ENCODE measurements at regions of chr1 and their contacts with region 1.

Region 1: GRCh38 chr1:109548321-109549267 is at the start of gene GNAI3:
- DNase-seq: peak; percentile 78 to 97 (median 95)
- ATAC-seq: peak; percentile 96
- H3K4me3 ChIP-seq: peak within 1 kb of the TSS; percentile 89
- H3K4me3 Mint-ChIP-seq: peak within 1 kb of the TSS; percentile 90 to 99 (median 97)
- H3K27ac ChIP-seq: peak within 1 kb of the TSS; percentile 93
- H3K27ac Mint-ChIP-seq: peak within 1 kb of the TSS; percentile 89 to 100 (median 99)
- H3K4me1 ChIP-seq: peaks cover 25 to 27% of the 10 kb centered on the region in 2 donors
- H3K4me1 Mint-ChIP-seq: peaks cover 30 to 75% (median 55%) of the 10 kb centered on the region in 7 donors
- H3K27me3 ChIP-seq: no peaks in the 10 kb centered on the region
- H3K27me3 Mint-ChIP-seq: no peaks in the 10 kb centered on the region
- total RNA-seq, gene GNAI3: 4.9 to 9.3 (median 7.0) TPM

Region 2: GRCh38 chr1:109109906-109110305 is 438.7 kb before region 1 on chr1:
- CTCF ChIA-PET with region 1: no interaction called
- POLR2A ChIA-PET with region 1: no interaction called
- intact Hi-C with region 1: no loop called
- DNase-seq: no peak
- ATAC-seq: no peak
- H3K4me3 ChIP-seq: no peak overlapping the region
- H3K4me3 Mint-ChIP-seq: no peak overlapping the region
- H3K27ac ChIP-seq: no peak overlapping the region
- H3K27ac Mint-ChIP-seq: no peak overlapping the region
- H3K4me1 ChIP-seq: peaks cover 16 to 21% of the 10 kb centered on the region in 2 donors
- H3K4me1 Mint-ChIP-seq: peaks cover 21 to 36% (median 27%) of the 10 kb centered on the region in 7 donors
- H3K27me3 ChIP-seq: no peaks in the 10 kb centered on the region
- H3K27me3 Mint-ChIP-seq: peaks cover 0 to 47% (median 0%) of the 10 kb centered on the region in 5 donors

Region 3: GRCh38 chr1:109213785-109214468 is 334.7 kb before region 1 on chr1 and contains the start of gene SARS1:
- CTCF ChIA-PET with region 1: no interaction called
- POLR2A ChIA-PET with region 1: no interaction called
- intact Hi-C with region 1: loop called in 1 of 2 experiments (anchors 1 kb)
- DNase-seq: peak; percentile 77 to 96 (median 91)
- ATAC-seq: peak; percentile 91
- H3K4me3 ChIP-seq: peak within 1 kb of the TSS; percentile 97
- H3K4me3 Mint-ChIP-seq: peak within 1 kb of the TSS; percentile 94 to 100 (median 98)
- H3K27ac ChIP-seq: peak within 1 kb of the TSS; percentile 85
- H3K27ac Mint-ChIP-seq: peak within 1 kb of the TSS; percentile 85 to 98 (median 97)
- H3K4me1 ChIP-seq: peaks cover 22 to 27% of the 10 kb centered on the region in 2 donors
- H3K4me1 Mint-ChIP-seq: peaks cover 33 to 47% (median 42%) of the 10 kb centered on the region in 7 donors
- H3K27me3 ChIP-seq: no peaks in the 10 kb centered on the region
- H3K27me3 Mint-ChIP-seq: peaks cover 0 to 4% (median 0%) of the 10 kb centered on the region in 5 donors
- total RNA-seq, gene SARS1: 110 to 173 (median 135) TPM

Region 4: DNA sequence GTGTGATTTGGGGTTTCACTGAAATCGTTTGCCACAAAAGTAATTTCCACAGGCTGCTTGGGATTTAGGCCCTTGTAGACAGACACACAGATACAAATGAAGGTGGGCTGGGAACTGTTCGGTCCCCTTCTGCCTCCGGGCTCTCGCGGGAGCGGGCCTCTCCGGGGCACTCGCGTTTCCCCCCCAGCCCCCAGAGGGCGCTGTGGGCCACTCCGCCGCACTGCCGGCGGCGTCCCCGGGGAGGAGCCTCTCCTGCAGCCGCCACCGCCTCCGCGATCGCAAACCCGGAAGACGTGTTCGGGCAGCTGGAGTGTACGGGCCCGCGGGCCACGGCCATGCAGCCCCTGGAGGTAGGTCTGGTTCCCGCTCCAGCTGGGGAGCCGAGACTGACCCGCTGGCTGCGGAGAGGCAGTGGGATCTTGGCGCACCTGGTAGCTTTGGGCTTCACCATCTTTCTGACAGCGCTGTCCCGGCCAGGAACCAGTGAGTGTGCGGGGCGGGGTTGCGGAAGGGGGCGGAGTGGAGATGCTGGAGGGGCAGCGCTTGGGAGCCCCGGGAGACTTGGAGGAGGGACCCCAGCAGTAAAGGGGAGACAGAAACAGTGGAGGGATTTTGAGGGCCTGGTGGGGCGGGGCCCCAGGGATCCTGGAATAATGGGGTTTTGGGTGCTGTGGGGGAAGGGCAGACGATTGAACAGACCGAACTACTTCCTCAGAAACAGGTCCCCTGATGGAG is 54.6 kb before region 1 on chr1 and contains the start of gene CYB561D1:
- CTCF ChIA-PET with region 1: interaction called, 1,240 read pairs
- POLR2A ChIA-PET with region 1: interaction called, 11 read pairs
- intact Hi-C with region 1: loop called in 1 of 2 experiments (anchors 1 kb)
- DNase-seq: peak; percentile 83 to 97 (median 91)
- ATAC-seq: peak; percentile 96
- H3K4me3 ChIP-seq: peak within 1 kb of the TSS; percentile 96
- H3K4me3 Mint-ChIP-seq: peak within 1 kb of the TSS; percentile 90 to 98 (median 94)
- H3K27ac ChIP-seq: peak within 1 kb of the TSS; percentile 72
- H3K27ac Mint-ChIP-seq: peak within 1 kb of the TSS; percentile 84 to 98 (median 92)
- H3K4me1 ChIP-seq: peaks cover 31 to 59% of the 10 kb centered on the region in 2 donors
- H3K4me1 Mint-ChIP-seq: peaks cover 40 to 59% (median 53%) of the 10 kb centered on the region in 7 donors
- H3K27me3 ChIP-seq: no peaks in the 10 kb centered on the region
- H3K27me3 Mint-ChIP-seq: no peaks in the 10 kb centered on the region
- total RNA-seq, gene CYB561D1: 19.6 to 41.5 (median 24.1) TPM

Region 5: DNA sequence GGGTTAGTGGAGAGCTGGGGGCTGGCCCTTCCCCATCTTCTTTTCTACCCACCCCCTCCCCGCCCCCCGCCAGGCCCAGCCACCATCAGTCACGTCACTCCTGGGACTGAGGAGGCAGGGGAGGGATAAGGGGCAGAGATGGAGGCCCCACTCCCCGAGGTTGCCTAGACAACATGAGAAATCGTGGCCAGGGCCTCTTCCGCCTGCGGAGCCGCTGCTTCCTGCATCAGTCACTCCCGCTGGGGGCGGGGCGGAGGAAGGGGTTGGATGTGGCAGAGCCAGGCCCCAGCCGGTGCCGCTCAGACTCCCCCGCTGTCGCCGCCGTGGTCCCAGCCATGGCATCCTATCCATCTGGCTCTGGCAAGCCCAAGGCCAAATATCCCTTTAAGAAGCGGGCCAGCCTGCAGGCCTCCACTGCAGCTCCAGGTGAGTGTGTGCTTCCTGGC is 72.3 kb after region 1 on chr1:
- CTCF ChIA-PET with region 1: interaction called, 9 read pairs
- POLR2A ChIA-PET with region 1: interaction called, 52 read pairs
- intact Hi-C with region 1: loop called (anchors 1 kb)
- DNase-seq: peak; percentile 92 to 98 (median 95)
- ATAC-seq: peak; percentile 90
- H3K4me3 ChIP-seq: peak overlapping the region; percentile 78
- H3K4me3 Mint-ChIP-seq: peak overlapping the region; percentile 90 to 98 (median 94)
- H3K27ac ChIP-seq: peak overlapping the region; percentile 90
- H3K27ac Mint-ChIP-seq: peak overlapping the region; percentile 92 to 98 (median 96)
- H3K4me1 ChIP-seq: peaks cover 14 to 43% of the 10 kb centered on the region in 2 donors
- H3K4me1 Mint-ChIP-seq: peaks cover 52 to 79% (median 68%) of the 10 kb centered on the region in 7 donors
- H3K27me3 ChIP-seq: no peaks in the 10 kb centered on the region
- H3K27me3 Mint-ChIP-seq: no peaks in the 10 kb centered on the region

Region 6: GRCh38 chr1:109687616-109688499 is 139.3 kb after region 1 on chr1 and contains the start of gene GSTM1:
- CTCF ChIA-PET with region 1: no interaction called
- POLR2A ChIA-PET with region 1: no interaction called
- intact Hi-C with region 1: loop called in 1 of 2 experiments (anchors 5 kb)
- DNase-seq: peak in 5 of 9 donors; percentile 74 to 89 (median 82)
- ATAC-seq: no peak
- H3K4me3 ChIP-seq: no peak within 1 kb of the TSS
- H3K4me3 Mint-ChIP-seq: peak within 1 kb of the TSS in 7 of 10 donors; percentile 81 to 99 (median 90)
- H3K27ac ChIP-seq: peak within 1 kb of the TSS; percentile 70
- H3K27ac Mint-ChIP-seq: peak within 1 kb of the TSS in 6 of 9 donors; percentile 88 to 96 (median 94)
- H3K4me1 ChIP-seq: no peaks in the 10 kb centered on the region
- H3K4me1 Mint-ChIP-seq: peaks cover 0 to 27% (median 8%) of the 10 kb centered on the region in 7 donors
- H3K27me3 ChIP-seq: no peaks in the 10 kb centered on the region
- H3K27me3 Mint-ChIP-seq: no peaks in the 10 kb centered on the region
- total RNA-seq, gene GSTM1: 45.9 to 83.6 TPM in 2 of 5 experiments, not detected in the others

Region 7: DNA sequence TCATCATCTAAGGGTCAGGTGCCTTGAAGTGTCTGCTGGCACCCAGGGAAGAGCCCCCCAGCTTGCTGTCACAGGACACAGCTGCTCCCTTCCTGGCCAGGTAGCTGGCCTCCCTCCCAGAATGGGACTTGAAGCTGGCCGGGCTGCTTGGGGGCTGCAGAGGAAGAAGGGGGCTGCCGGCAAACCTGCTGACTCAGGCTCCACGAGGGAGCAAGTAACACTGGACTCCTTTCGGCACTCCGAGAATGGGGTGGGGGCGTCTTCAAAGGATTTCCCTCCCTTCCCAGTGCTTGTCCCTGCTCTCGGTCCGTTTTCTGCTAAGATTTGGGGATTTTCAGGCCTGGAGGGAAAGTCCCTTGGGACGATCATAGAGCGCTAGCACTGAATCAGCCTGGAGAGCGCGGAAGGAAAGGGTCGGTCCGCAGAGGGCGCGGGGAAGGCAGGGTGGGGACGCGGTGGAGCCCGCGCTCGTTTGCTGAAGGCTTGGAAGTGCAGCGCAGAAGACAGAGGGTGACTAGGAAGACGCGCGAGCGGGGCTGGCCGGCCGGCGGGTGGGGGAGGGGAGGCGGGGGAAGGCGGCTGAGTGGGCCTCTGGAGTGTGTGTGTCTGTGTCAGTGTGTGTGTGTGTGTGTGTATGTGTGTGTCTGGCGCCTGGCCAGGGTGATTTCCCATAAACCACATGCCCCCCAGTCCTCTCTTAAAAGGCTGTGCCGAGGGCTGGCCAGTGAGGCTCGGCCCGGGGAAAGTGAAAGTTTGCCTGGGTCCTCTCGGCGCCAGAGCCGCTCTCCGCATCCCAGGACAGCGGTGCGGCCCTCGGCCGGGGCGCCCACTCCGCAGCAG is 361.7 kb after region 1 on chr1 and contains the start of gene CSF1:
- CTCF ChIA-PET with region 1: no interaction called
- POLR2A ChIA-PET with region 1: no interaction called
- intact Hi-C with region 1: loop called (anchors 1 to 2 kb)
- DNase-seq: peak; percentile 15 to 72 (median 35)
- ATAC-seq: peak; percentile 71
- H3K4me3 ChIP-seq: peak within 1 kb of the TSS; percentile 65
- H3K4me3 Mint-ChIP-seq: peak within 1 kb of the TSS; percentile 78 to 98 (median 88)
- H3K27ac ChIP-seq: peak within 1 kb of the TSS; percentile 43
- H3K27ac Mint-ChIP-seq: peak within 1 kb of the TSS; percentile 38 to 97 (median 73)
- H3K4me1 ChIP-seq: peaks cover 36 to 43% of the 10 kb centered on the region in 2 donors
- H3K4me1 Mint-ChIP-seq: peaks cover 43 to 83% (median 64%) of the 10 kb centered on the region in 7 donors
- H3K27me3 ChIP-seq: no peaks in the 10 kb centered on the region
- H3K27me3 Mint-ChIP-seq: peaks cover 0 to 18% (median 0%) of the 10 kb centered on the region in 5 donors
- total RNA-seq, gene CSF1: 1.4 to 125 (median 5.9) TPM

Region 8: GRCh38 chr1:110209715-110210603 is 661.4 kb after region 1 on chr1 and contains the start of gene KCNC4:
- CTCF ChIA-PET with region 1: no interaction called
- POLR2A ChIA-PET with region 1: no interaction called
- intact Hi-C with region 1: loop called in 1 of 2 experiments (anchors 5 kb)
- DNase-seq: peak; percentile 80 to 93 (median 91)
- ATAC-seq: peak; percentile 93
- H3K4me3 ChIP-seq: peak within 1 kb of the TSS; percentile 72
- H3K4me3 Mint-ChIP-seq: peak within 1 kb of the TSS; percentile 86 to 94 (median 88)
- H3K27ac ChIP-seq: peak within 1 kb of the TSS; percentile 89
- H3K27ac Mint-ChIP-seq: peak within 1 kb of the TSS; percentile 88 to 98 (median 95)
- H3K4me1 ChIP-seq: peaks cover 7 to 20% of the 10 kb centered on the region in 2 donors
- H3K4me1 Mint-ChIP-seq: peaks cover 31 to 61% (median 42%) of the 10 kb centered on the region in 7 donors
- H3K27me3 ChIP-seq: no peaks in the 10 kb centered on the region
- H3K27me3 Mint-ChIP-seq: peaks cover 0 to 16% (median 0%) of the 10 kb centered on the region in 5 donors
- total RNA-seq, gene KCNC4: 5.8 to 18.2 (median 12.4) TPM